ENCODE measurements at regions of chr19 and their contacts with region 1.

Region 1: DNA sequence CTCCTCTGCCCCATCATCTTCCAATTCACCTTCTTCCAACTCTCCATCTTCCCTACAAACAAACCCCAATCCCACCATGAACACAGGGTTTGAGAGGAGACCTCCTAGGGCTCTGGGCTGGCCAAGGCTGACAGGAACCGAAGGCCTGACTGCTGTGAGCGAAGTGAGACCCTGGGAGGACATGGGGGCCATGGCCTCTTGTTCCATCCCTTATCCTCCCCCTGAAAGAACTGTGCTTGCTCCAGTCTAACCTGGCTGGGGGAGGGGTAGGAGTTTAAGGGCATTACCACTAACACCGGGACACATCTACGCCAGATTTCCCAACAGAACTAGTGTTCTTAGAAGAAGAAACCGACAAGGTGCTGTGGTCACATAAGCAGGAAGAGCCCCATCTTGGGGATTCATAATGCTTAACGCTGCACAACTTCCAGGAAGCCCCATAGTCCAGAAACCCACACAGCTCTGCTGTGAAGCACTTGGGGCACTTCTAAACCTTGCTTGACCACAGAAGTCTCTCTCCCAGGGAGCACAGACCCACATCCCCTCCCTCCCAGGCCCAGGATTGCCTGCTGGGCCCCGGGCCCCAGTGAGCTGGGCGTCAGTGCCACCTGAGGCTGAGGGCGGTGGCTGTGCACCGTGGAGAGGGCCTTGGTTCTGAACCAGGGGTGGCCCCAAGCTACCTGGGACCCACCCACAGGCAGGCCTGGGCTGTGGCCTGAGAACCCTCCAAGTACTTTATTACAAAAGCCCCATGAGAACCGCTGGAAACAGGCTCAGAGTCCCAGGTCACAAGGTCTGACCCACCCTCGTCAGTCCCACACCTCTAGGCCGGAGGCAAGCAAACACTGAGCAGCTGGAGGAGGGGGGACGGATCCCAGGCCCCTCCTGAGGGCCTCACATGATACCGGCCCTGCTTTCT is 18.8 kb downstream of the ZC3H4 start:
- DNase-seq: peak; percentile 75
- ATAC-seq: peak; percentile 85
- H3K4me3 Mint-ChIP-seq: peak overlapping the region; percentile 89
- H3K27ac Mint-ChIP-seq: peak overlapping the region; percentile 89
- H3K4me1 Mint-ChIP-seq: peaks cover 66% of the 10 kb centered on the region
- H3K27me3 Mint-ChIP-seq: no peaks in the 10 kb centered on the region

Region 2: GRCh38 chr19:46850228-46851203 is 244.3 kb before region 1 on chr19 and contains the start of gene AP2S1:
- POLR2A ChIA-PET with region 1: no interaction called
- DNase-seq: peak; percentile 84
- ATAC-seq: peak; percentile 98
- H3K4me3 Mint-ChIP-seq: peak within 1 kb of the TSS; percentile 92
- H3K27ac Mint-ChIP-seq: peak within 1 kb of the TSS; percentile 88
- H3K4me1 Mint-ChIP-seq: peaks cover 25% of the 10 kb centered on the region
- H3K27me3 Mint-ChIP-seq: peaks cover 2% of the 10 kb centered on the region
- total RNA-seq, gene AP2S1: 103 to 110 TPM

Region 3: GRCh38 chr19:47107202-47107940 is 12.6 kb after region 1 on chr19:
- POLR2A ChIA-PET with region 1: interaction called, 192 read pairs
- DNase-seq: no peak
- ATAC-seq: peak; percentile 44
- H3K4me3 Mint-ChIP-seq: peak overlapping the region; percentile 97
- H3K27ac Mint-ChIP-seq: peak overlapping the region; percentile 100
- H3K4me1 Mint-ChIP-seq: peaks cover 49% of the 10 kb centered on the region
- H3K27me3 Mint-ChIP-seq: no peaks in the 10 kb centered on the region

Region 4: DNA sequence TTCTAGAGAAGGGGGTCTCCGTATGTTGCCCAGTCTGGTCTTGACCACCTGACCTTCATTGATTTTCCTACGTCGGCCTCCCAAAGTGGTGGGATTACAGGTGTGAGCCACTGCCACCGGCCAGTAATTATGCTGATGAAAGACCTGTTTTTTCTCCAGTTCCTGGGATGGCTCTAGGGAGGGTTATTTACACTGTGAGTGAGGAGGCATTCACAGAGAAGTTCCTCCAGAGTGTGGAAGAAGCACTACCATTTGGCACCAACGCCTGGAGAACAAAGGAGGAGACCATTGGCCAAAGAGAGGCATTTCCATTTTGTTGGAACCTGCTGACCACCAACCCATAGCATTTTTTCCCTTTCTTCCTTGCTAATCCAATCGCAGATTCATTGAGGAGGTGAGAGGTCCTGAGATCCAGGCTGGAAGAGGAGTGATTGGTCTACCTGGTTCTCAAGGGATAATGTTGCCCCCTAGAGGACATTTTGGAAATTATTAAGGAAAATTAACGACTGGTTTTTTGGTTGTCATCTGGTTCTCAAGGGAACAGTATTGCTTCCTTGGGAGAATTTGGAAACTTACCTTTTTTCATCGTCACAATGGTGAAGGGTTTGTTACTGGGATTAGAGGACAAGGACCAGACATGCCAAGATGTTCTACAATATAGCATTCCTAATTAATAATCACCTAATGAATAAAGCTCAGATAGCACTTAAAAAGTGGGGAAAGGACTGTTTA is 30.3 kb after region 1 on chr19:
- POLR2A ChIA-PET with region 1: no interaction called
- DNase-seq: no peak
- ATAC-seq: peak; percentile 50
- H3K4me3 Mint-ChIP-seq: no peak overlapping the region
- H3K27ac Mint-ChIP-seq: no peak overlapping the region
- H3K4me1 Mint-ChIP-seq: peaks cover 9% of the 10 kb centered on the region
- H3K27me3 Mint-ChIP-seq: peaks cover 1% of the 10 kb centered on the region